ENCODE measurements at regions of chr5 and their contacts with region 1.

Region 1: DNA sequence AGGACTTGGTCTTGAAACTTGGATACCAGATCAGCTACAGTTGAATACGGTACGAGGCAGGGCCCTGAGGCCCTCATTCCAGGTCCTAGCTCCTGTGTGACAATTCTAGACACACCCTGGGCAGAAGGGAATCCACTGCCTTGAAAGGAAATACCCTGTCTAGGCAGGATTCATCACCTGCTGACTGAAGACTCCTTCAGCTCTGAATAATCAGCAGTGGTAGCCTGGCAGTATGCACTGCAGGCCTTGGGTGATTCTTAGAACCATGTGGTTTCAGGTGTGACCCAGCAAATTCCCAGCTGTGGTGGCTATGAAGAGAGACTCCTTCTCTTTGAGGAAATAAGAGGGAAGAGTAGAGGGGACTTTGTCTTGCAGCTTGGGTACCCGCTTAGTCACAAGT is 17.2 kb upstream of the EFNA5 start:
- DNase-seq: no peak
- H3K4me3 ChIP-seq: no peak overlapping the region
- H3K27ac ChIP-seq: no peak overlapping the region
- H3K4me1 ChIP-seq: no peaks in the 10 kb centered on the region
- H3K27me3 ChIP-seq: no peaks in the 10 kb centered on the region
- CTCF ChIP-seq: no peak

Region 2: GRCh38 chr5:107455111-107455588 is 232.8 kb before region 1 on chr5:
- CTCF ChIA-PET with region 1: no interaction called
- POLR2A ChIA-PET with region 1: interaction called, 11 read pairs
- intact Hi-C with region 1: no loop called
- DNase-seq: peak in 1 of 2 experiments; percentile 89
- H3K4me3 ChIP-seq: peak overlapping the region; percentile 13; the same call in 1 of the 2 replicates
- H3K27ac ChIP-seq: peak overlapping the region; percentile 72
- H3K4me1 ChIP-seq: peaks cover 47% of the 10 kb centered on the region
- H3K27me3 ChIP-seq: no peaks in the 10 kb centered on the region
- CTCF ChIP-seq: no peak

Region 3: GRCh38 chr5:107812570-107813141 is 124.7 kb after region 1 on chr5:
- CTCF ChIA-PET with region 1: no interaction called
- POLR2A ChIA-PET with region 1: no interaction called
- intact Hi-C with region 1: no loop called
- DNase-seq: no peak
- H3K4me3 ChIP-seq: no peak overlapping the region
- H3K27ac ChIP-seq: no peak overlapping the region
- H3K4me1 ChIP-seq: no peaks in the 10 kb centered on the region
- H3K27me3 ChIP-seq: no peaks in the 10 kb centered on the region
- CTCF ChIP-seq: no peak

Measured in PC-9 (cell line).